Activated CD4-positive, alpha-beta T cell treated with anti-CD3 and anti-CD28 coated beads, Interleukin-2, amount 10 ng/mL, durations not matched to agents 24 days and 14 days (primary cell): ENCODE measurements at regions of chr11 and their contacts with region 1.

Region 1: DNA sequence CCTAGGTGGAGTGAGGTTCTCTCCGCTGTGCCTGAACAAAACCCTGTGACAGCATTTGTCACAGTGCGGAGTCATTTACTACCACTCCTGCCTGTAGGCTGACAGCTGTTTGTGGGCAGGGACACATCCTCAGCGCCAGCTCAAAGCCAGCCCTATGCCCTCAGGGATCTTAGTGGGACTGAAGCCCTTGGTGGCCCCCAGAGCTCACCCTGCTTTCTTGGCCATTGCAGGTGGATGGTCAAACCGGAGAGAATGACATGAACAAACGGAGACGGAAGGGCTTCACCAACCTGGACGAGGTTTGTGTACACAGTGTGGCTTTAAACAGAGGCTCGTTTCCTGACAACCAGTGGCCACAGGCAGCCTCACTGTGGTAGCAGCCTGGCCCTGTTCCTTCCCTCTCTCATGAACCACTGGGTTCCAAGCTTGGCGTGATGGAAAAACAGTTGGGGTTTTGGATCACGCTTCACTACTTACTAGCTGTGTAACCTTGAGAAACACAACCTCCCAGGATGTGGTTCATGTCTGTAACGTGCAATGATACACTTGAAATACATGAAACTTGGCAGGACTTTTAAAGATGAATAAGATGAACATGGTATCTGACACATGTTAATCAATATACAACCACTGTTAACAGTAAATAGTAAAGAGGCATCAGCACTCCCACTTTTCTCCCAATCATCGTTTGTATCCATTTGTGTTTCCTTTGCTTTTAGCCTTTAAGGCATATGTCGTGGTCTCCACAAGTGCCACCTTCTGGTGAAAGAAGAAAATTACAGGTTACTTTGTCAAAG is 125.8 kb downstream of the MICAL2 start:
- DNase-seq: peak; percentile 91
- H3K4me3 Mint-ChIP-seq: peak overlapping the region; percentile 77
- H3K27ac Mint-ChIP-seq: peak overlapping the region; percentile 98
- H3K4me1 Mint-ChIP-seq: peaks cover 54% of the 10 kb centered on the region
- H3K27me3 Mint-ChIP-seq: no peaks in the 10 kb centered on the region

Region 2: DNA sequence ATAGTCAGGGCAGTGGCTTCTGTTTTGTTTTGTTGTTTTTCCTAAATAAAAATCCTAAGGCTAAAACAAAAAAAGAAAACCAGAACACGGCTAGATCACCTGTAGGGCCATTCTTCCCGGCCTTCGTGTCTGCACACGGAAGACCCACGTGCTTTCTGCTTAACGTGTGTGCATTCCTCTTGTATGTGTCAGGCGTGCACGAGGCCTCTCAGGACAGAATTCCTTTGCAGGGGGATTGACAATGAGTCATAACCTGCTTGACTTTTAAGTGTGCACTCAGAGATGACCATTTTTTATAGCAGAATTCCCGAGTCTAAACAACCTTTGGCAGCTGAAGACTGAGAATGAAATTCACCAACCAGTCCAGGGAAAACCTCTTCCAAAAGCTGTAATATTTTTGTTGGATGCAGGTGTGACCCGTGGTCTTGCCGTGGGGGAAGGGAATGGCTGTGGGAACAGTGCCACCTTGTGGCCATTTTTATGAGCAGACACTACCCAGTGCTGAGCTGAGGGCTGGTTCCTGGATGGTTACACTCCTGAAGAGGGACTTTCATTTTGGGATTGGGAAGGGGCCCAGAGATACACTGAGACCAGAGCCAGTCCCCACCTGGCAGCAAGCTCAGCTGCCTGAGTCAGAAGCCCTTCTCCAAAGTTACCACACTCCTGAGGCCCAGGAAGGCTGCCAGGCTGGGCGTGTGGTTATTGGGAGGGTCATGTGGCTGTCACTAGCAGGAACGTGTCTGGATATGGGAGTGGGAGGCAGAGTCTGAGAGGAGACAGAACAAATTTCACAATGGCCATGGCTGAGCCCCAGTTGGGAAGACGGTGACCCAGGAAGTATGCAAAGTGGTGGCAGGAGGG is 192.0 kb before region 1 on chr11:
- intact Hi-C with region 1: loop called (anchors 1 kb)
- DNase-seq: peak; percentile 90
- H3K4me3 Mint-ChIP-seq: no peak overlapping the region
- H3K27ac Mint-ChIP-seq: peak overlapping the region; percentile 2
- H3K4me1 Mint-ChIP-seq: peaks cover 19% of the 10 kb centered on the region
- H3K27me3 Mint-ChIP-seq: peaks cover 16% of the 10 kb centered on the region

Region 3: GRCh38 chr11:12110201-12110713 is 125.9 kb before region 1 on chr11 and contains the start of gene MICAL2:
- intact Hi-C with region 1: loop called (anchors 1 kb)
- DNase-seq: peak; percentile 97
- H3K4me3 Mint-ChIP-seq: peak within 1 kb of the TSS; percentile 89
- H3K27ac Mint-ChIP-seq: peak within 1 kb of the TSS; percentile 99
- H3K4me1 Mint-ChIP-seq: peaks cover 57% of the 10 kb centered on the region
- H3K27me3 Mint-ChIP-seq: no peaks in the 10 kb centered on the region
- total RNA-seq, gene MICAL2: 501 and 510 TPM in 2 replicates

Region 4: GRCh38 chr11:12195768-12196167 is 40.4 kb before region 1 on chr11:
- intact Hi-C with region 1: loop called (anchors 2 kb)
- DNase-seq: peak; percentile 90
- H3K4me3 Mint-ChIP-seq: peak overlapping the region; percentile 94
- H3K27ac Mint-ChIP-seq: peak overlapping the region; percentile 96
- H3K4me1 Mint-ChIP-seq: peaks cover 70% of the 10 kb centered on the region
- H3K27me3 Mint-ChIP-seq: no peaks in the 10 kb centered on the region

Region 5: DNA sequence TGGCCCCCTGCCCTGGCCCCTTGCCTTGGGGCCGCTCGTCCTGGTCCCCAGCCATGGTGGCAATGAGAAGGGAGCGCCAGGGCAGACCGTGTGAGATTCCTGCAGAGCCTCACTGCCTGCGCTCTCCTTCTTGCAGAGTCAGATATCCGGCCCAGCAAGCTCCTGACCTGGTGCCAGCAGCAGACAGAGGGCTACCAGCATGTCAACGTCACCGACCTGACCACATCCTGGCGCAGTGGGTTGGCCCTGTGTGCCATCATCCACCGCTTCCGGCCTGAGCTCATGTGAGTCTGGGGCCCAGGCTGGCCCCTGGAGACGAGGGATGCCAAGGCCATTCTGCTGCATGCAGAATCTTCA is 11.6 kb before region 1 on chr11:
- intact Hi-C with region 1: loop called (anchors 1 kb)
- DNase-seq: peak; percentile 95
- H3K4me3 Mint-ChIP-seq: peak overlapping the region; percentile 76
- H3K27ac Mint-ChIP-seq: peak overlapping the region; percentile 92
- H3K4me1 Mint-ChIP-seq: peaks cover 48% of the 10 kb centered on the region
- H3K27me3 Mint-ChIP-seq: no peaks in the 10 kb centered on the region